ENCODE measurements at regions of chr4 and their contacts with region 1.

Region 1: GRCh38 chr4:159010563-159011260 is 92.2 kb upstream of the RAPGEF2 start:
- DNase-seq: peak; percentile 24 to 64
- H3K4me3 ChIP-seq: no peak overlapping the region
- H3K27ac ChIP-seq: peak overlapping the region; percentile 71
- H3K4me1 ChIP-seq: peaks cover 39% of the 10 kb centered on the region
- H3K27me3 ChIP-seq: no peaks in the 10 kb centered on the region
- CTCF ChIP-seq: no peak

Region 2: GRCh38 chr4:159047478-159048165 is 36.9 kb after region 1 on chr4:
- CTCF ChIA-PET with region 1: no interaction called
- POLR2A ChIA-PET with region 1: no interaction called
- intact Hi-C with region 1: loop called (anchors 2 kb)
- DNase-seq: peak; percentile 9 to 47
- H3K4me3 ChIP-seq: no peak overlapping the region
- H3K27ac ChIP-seq: no peak overlapping the region
- H3K4me1 ChIP-seq: no peaks in the 10 kb centered on the region
- H3K27me3 ChIP-seq: no peaks in the 10 kb centered on the region
- CTCF ChIP-seq: no peak

Region 3: GRCh38 chr4:159150821-159151390 is 140.2 kb after region 1 on chr4:
- CTCF ChIA-PET with region 1: no interaction called
- POLR2A ChIA-PET with region 1: no interaction called
- intact Hi-C with region 1: no loop called
- DNase-seq: no peak
- H3K4me3 ChIP-seq: no peak overlapping the region
- H3K27ac ChIP-seq: no peak overlapping the region
- H3K4me1 ChIP-seq: peaks cover 7% of the 10 kb centered on the region
- H3K27me3 ChIP-seq: no peaks in the 10 kb centered on the region
- CTCF ChIP-seq: no peak